ENCODE measurements at regions of chr12 and their contacts with region 1.

Region 1: GRCh38 chr12:56117778-56118687 is at the start of gene ZC3H10:
- DNase-seq: peak; percentile 99
- H3K4me3 Mint-ChIP-seq: peak within 1 kb of the TSS; percentile 99
- H3K27ac Mint-ChIP-seq: peak within 1 kb of the TSS; percentile 99
- H3K4me1 Mint-ChIP-seq: peaks cover 40% of the 10 kb centered on the region
- H3K27me3 Mint-ChIP-seq: no peaks in the 10 kb centered on the region
- total RNA-seq, gene ZC3H10: 8.0 to 10.3 TPM

Region 2: DNA sequence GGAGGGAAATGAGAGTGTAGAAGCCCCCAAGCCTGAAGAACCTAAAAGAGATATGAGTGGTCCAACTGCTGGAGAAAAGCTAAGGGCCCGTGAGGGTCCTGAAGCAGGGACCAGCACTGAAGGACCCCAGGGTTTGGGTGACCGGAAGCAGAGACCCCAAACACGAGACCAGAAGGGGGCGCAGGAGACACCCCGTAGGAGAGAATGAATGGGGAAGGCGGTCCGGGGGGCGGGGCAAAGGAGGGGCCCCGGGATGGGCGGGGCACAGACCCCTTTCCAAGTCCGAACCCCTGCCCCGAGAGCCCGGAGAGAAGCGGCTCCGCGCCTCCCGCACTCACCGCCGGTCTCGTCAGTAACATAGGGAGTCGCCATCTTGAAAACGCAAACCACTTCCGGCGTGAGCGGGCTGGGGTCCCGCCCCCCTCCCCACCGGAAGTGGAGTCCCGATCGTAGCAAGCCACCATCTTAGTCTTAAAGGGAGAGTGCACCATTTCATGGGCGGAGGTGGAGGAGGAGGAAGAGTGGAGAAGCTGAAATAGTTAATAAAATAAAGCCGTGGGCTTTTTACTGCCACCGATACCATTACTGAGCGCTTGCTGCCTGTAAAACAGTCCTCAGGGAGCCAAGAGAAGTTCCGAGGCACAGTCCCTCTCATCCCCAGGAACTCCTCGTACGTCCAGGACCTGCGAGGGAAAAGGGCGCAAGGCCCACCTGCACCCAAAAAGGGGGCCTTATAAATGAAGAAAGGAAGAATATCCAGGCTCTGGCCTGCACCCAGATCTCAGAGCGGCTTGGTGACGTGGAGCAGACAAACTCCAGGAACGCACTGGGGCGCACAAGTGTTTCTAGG is 191.1 kb before region 1 on chr12:
- CTCF ChIA-PET with region 1: no interaction called
- POLR2A ChIA-PET with region 1: interaction called, 13 read pairs
- DNase-seq: peak; percentile 95
- H3K4me3 Mint-ChIP-seq: peak overlapping the region; percentile 91
- H3K27ac Mint-ChIP-seq: peak overlapping the region; percentile 96
- H3K4me1 Mint-ChIP-seq: peaks cover 53% of the 10 kb centered on the region
- H3K27me3 Mint-ChIP-seq: no peaks in the 10 kb centered on the region

Region 3: GRCh38 chr12:56104109-56104814 is 13.8 kb before region 1 on chr12 and contains the start of gene PA2G4:
- CTCF ChIA-PET with region 1: interaction called, 56 read pairs
- POLR2A ChIA-PET with region 1: interaction called, 226 read pairs
- DNase-seq: peak; percentile 99
- H3K4me3 Mint-ChIP-seq: peak within 1 kb of the TSS; percentile 99
- H3K27ac Mint-ChIP-seq: peak within 1 kb of the TSS; percentile 98
- H3K4me1 Mint-ChIP-seq: peaks cover 53% of the 10 kb centered on the region
- H3K27me3 Mint-ChIP-seq: no peaks in the 10 kb centered on the region
- total RNA-seq, gene PA2G4: 242 to 243 TPM

Region 4: DNA sequence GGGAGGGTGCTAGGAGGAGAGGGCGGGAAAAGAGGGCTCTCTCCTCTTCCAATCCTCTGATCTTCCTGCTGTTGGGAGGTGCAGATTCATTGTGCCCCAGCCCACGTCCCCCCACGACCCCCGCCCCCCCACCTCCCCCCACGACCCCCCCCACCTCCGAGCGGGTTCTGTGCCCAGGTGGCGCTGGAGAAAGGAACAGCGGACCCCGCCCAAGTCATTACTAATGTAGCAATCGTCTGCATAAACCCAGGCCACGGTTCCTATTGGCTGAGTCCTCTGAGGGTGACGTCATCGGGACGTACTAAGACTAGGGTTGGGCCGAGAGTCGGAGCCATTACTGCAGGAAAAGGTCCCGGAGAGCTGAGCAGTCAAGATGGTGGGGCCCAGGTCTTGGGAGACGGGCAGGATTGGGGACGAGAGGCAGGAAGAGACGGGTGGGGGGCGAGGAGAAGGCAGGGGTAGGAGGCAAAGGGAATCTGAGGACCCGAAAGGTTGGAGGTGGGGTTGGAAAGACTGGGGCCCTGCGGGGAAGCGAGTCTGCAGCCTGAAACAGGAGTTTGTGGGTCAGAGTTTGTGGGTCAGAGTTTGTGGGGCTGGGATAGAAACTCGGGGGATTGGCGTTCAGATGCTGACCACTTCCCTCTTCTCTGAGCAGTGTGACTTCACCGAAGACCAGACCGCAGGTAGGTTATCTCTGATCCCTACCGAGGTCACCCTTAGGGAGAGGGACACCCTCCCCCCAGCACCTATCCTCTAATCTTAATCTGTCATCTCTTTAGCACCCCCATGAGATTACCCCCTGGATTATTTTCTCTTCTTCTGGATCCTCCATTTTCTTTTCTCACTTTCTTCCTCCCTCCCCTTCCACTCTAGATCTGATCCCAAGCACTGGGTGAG is 40.2 kb after region 1 on chr12 and contains the start of gene MYL6:
- CTCF ChIA-PET with region 1: interaction called, 86 read pairs
- POLR2A ChIA-PET with region 1: interaction called, 39 read pairs
- DNase-seq: peak; percentile 94
- H3K4me3 Mint-ChIP-seq: peak within 1 kb of the TSS; percentile 91
- H3K27ac Mint-ChIP-seq: peak within 1 kb of the TSS; percentile 90
- H3K4me1 Mint-ChIP-seq: peaks cover 59% of the 10 kb centered on the region
- H3K27me3 Mint-ChIP-seq: no peaks in the 10 kb centered on the region
- total RNA-seq, gene MYL6: 1,594 to 1,602 TPM

Region 5: GRCh38 chr12:56178347-56178746 is 60.3 kb after region 1 on chr12:
- CTCF ChIA-PET with region 1: no interaction called
- POLR2A ChIA-PET with region 1: no interaction called
- DNase-seq: no peak
- H3K4me3 Mint-ChIP-seq: no peak overlapping the region
- H3K27ac Mint-ChIP-seq: no peak overlapping the region
- H3K4me1 Mint-ChIP-seq: peaks cover 1% of the 10 kb centered on the region
- H3K27me3 Mint-ChIP-seq: no peaks in the 10 kb centered on the region

Region 6: DNA sequence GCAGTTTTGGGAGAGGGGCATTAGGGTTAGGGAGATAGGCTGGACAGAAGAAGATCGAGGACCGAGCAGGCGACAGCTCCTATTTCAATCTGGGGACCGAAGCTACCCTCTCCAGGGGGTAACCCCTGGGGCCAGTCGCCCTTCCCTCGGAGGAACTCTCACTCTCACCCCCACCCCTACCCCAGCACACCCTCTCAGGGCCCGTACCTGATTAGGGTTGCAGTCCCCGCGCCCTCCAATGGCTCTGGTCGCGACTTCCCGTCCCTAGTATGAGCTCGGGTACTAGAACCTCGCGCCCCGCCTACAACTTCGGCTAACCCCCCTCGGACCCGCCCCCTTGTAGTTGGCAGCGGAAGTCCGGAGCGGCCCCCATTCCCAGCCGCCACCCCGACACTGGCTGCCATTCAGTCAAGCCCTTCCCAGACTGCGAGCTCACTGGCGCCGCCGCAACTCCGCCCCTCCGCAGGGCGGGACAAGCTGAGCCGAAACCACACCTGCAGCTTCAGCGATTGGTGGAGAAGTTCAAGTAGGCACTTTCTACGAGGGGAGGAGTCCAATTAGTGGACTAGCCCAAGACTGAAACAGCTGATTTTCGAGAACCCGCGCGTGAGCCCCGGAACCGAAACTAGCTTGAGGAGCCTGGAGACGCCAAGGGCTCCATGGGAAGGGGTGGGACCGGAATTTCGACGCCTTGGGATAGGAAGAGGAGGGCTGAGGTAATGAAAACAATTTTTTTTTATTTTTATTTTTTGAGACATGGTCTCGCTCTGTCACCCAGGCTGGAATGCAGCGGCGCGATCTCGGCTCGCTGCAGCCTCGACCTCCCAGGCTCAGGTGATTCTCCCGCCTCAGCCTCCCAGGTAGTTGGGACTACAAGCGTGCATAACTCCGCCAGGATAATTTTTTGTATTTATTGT is 242.1 kb after region 1 on chr12 and contains the start of gene STAT2:
- CTCF ChIA-PET with region 1: interaction called, 5 read pairs
- POLR2A ChIA-PET with region 1: interaction called, 19 read pairs
- DNase-seq: peak; percentile 100
- H3K4me3 Mint-ChIP-seq: peak within 1 kb of the TSS; percentile 93
- H3K27ac Mint-ChIP-seq: peak within 1 kb of the TSS; percentile 90
- H3K4me1 Mint-ChIP-seq: peaks cover 28% of the 10 kb centered on the region
- H3K27me3 Mint-ChIP-seq: no peaks in the 10 kb centered on the region
- total RNA-seq, gene STAT2: 298 to 304 TPM